Dorsolateral prefrontal cortex (tissue), 120 donors: ENCODE measurements at regions of chr20 and their contacts with region 1.

Region 1: GRCh38 chr20:25865380-25866118 is 168.9 kb upstream of the ZNF337 start:
- DNase-seq: peak; percentile 79 to 90 (median 86)
- H3K4me3 ChIP-seq: peak overlapping the region; percentile 29 to 76 (median 60)
- H3K27ac ChIP-seq: peak overlapping the region in 50 of 59 donors; percentile 10 to 87 (median 67)
- H3K27me3 ChIP-seq: no peaks in the 10 kb centered on the region
- CTCF ChIP-seq: peak in 10 of 56 donors; percentile 10 to 38 (median 18)

Region 2: DNA sequence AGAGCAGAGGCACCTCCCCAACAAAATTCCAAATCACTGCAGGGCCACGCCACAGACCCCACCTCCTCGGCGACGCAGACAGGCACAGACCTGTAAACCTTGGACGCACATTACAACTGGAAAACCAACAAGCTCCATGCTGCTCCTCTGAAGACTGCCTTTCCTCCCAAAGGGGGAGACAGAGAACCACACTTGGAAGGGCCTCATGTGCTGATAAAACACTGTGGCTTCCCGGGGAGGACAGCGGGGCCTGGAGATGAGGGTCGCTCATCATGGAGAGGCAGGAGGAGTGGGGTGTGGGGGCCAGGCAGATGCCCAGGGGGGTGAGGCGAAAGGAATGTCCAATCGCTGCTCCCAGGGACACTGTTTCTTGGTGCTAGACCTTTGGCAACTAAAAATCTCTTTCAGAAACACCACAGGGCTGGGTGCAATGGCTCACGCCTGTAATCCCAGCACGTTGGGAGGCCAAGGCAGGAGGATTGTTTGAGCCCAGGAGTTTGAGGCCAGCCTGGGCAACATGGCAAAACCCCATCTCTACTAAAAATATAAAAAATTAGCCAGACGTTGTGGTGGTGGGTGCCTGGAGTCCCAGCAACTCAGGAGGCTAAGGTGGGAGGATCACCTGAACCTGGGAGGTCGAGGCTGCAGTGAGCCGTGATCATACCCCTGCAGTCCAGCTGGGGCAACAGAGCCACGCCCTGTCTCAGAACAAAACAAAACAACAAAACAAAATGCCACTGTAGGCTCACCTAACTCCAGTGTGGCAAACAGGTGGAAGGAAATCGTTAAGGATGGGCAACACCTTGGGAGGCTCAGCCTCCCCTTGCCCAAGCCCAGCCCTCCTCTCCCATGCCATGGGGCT is 528.8 kb before region 1 on chr20:
- intact Hi-C with region 1: no loop called
- DNase-seq: peak in 2 of 10 donors; percentile 57 to 66
- H3K4me3 ChIP-seq: no peak overlapping the region
- H3K27ac ChIP-seq: peak overlapping the region in 25 of 59 donors; percentile 2 to 68 (median 40)
- H3K27me3 ChIP-seq: no peaks in the 10 kb centered on the region
- CTCF ChIP-seq: peak in 55 of 56 donors; percentile 19 to 78 (median 50)

Region 3: GRCh38 chr20:25496968-25497640 is 368.4 kb before region 1 on chr20:
- intact Hi-C with region 1: no loop called
- DNase-seq: no peak
- H3K4me3 ChIP-seq: no peak overlapping the region
- H3K27ac ChIP-seq: no peak overlapping the region
- H3K27me3 ChIP-seq: no peaks in the 10 kb centered on the region
- CTCF ChIP-seq: no peak

Region 4: DNA sequence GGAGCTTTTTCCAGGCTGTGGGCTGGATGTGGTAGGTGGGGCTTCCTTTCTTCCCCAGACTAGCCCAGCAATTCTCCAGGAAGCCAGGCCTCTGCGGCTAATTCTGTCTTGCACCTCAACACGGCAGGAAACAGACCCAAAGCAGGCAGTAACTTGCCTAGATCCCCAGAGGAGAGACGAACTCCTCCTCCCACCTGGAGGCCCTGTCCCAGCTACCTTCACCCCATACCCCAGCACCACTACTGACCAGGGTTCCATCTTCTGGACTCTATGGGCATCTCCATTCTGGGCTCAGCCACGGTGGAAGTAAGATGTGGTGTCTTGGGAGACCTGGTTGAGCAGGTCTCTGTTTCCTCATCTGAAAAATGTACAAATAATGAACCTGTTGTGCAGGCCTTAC is 120.4 kb before region 1 on chr20:
- intact Hi-C with region 1: loop called in 1 of 2 experiments (anchors 5 kb)
- DNase-seq: no peak
- H3K4me3 ChIP-seq: no peak overlapping the region
- H3K27ac ChIP-seq: peak overlapping the region in 13 of 59 donors; percentile 30 to 80 (median 65)
- H3K27me3 ChIP-seq: no peaks in the 10 kb centered on the region
- CTCF ChIP-seq: no peak

Region 5: GRCh38 chr20:25761596-25761995 is 104.0 kb before region 1 on chr20:
- intact Hi-C with region 1: no loop called
- DNase-seq: no peak
- H3K4me3 ChIP-seq: no peak overlapping the region
- H3K27ac ChIP-seq: no peak overlapping the region
- H3K27me3 ChIP-seq: peaks cover 0 to 5% (median 0%) of the 10 kb centered on the region in 45 donors
- CTCF ChIP-seq: no peak